Activated T-helper 2 cell treated with anti-CD3 and anti-CD28 coated beads, Interferon-gamma antibody, Interleukin-2, Interleukin-4, amounts not matched to agents 10 μg/mL and 5 μg/mL and 100 μg/mL, durations not matched to agents 14 hours and 24 hours and 36 hours (primary cell): ENCODE measurements at regions of chr16 and their contacts with region 1.

Region 1: DNA sequence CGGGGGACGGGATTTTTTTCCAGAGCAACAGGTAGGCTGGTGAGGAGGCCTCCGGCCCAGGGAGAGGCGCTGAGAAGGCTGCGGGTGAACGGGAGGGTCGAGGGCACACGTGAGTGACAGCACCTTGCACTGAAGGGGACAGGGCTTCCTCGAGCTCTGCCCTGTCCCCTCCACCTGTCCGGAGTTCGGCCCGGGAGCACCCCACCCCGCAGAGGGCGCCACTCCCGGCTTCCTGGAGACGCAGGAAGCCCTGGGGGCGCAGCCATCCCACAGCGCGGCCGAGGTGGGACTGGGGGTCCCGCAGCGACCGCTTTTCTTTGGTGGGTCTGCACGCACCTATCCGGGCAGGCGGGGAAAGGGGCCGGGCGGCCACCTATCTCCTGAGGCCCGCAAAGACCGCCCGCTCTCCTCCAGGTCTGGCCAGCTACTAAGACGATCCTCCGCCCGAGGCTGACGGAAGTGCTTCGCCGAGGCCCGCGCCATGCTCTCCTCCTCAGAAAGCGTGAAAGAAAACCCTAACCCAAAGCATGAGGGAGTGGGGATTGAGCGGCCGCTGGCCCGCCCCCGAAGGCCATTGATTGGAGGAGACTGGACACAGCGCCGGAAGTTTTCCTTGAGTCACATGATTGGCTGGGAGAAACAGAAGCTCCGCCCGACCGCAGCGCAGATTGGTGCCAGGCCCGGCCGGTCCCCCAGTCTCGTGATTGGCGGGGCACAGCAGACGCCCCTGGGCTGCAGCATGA is 34.3 kb downstream of the DDX19A start:
- DNase-seq: peak; percentile 97
- H3K4me3 Mint-ChIP-seq: peak overlapping the region; percentile 98
- H3K27ac Mint-ChIP-seq: peak overlapping the region; percentile 99
- H3K4me1 Mint-ChIP-seq: peaks cover 2% of the 10 kb centered on the region
- H3K27me3 Mint-ChIP-seq: no peaks in the 10 kb centered on the region

Region 2: DNA sequence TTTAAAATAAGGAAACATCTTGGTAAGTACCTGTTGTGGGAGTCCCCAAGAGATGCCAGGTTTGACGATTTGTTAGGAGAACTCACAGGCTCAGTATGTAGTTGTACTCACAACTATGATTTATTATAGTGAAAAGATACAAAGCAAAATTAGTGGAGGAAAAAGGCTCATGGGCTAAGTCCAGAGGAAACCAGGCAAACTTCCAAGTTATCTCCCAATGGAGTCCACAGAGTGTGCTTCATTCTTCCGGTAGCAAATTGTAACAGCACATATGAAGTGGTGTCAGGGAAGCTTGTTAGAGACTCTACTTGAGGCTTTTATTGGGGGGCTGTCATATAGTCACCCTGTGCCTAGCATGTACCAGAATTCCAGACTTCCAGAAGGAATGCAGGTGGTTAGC is 32.0 kb before region 1 on chr16:
- intact Hi-C with region 1: loop called (anchors 1 kb)
- DNase-seq: no peak
- H3K4me3 Mint-ChIP-seq: no peak overlapping the region
- H3K27ac Mint-ChIP-seq: peak overlapping the region; percentile 28
- H3K4me1 Mint-ChIP-seq: peaks cover 24% of the 10 kb centered on the region
- H3K27me3 Mint-ChIP-seq: no peaks in the 10 kb centered on the region

Region 3: DNA sequence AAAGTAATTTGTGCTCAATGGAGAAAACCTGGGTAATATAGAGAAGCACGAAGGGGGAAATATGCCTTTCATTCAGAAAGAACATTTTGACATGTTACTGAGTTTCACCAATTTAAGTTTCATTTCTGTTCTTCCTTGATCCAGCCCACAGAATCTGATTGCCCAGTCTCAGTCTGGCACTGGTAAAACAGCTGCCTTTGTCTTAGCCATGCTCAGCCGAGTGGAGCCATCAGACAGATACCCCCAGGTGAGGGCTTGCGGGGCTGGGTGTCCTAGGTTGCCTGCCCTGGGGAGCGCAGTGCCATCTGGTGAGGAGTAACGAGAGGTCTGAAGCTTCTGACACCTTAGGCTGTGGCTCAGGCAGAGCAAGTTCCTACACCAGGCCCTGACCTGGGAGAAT is 16.6 kb before region 1 on chr16:
- intact Hi-C with region 1: no loop called
- DNase-seq: no peak
- H3K4me3 Mint-ChIP-seq: no peak overlapping the region
- H3K27ac Mint-ChIP-seq: no peak overlapping the region
- H3K4me1 Mint-ChIP-seq: no peaks in the 10 kb centered on the region
- H3K27me3 Mint-ChIP-seq: no peaks in the 10 kb centered on the region

Region 4: DNA sequence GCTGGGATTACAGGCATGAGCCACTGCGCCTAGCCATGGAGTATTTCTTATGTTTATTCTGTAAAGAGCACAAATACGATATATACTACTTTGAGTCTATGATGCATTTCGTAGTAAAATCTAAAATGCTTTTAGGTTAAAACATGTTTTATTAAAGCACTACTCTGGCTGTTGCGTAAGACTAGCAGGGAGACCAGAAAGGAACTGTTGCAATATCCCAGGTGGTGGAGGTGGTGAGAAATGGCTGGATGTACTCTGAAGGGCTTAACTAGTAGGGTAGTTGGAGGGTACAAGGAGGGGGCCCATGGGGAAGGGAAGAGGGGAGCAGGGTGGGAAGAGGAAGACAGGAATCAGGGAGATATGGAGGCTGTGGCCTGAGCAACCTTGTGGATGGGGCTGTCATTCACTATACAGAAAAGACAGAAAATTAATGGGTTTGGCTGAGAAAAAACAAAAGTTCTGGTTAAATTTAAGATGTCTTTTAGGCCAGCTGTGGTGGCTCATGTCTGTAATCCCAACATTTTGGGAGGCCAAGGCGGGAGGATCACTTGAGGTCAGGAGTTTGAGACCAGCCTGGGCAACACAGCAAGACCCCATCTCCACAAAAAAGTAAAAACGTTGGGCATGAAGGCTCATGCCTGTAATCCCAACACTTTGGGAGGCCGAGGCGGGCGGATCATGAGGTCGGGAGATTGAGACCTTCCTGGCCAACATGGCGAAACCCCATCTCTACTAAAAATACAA is 22.1 kb after region 1 on chr16:
- intact Hi-C with region 1: loop called (anchors 2 kb)
- DNase-seq: no peak
- H3K4me3 Mint-ChIP-seq: no peak overlapping the region
- H3K27ac Mint-ChIP-seq: peak overlapping the region; percentile 8
- H3K4me1 Mint-ChIP-seq: peaks cover 36% of the 10 kb centered on the region
- H3K27me3 Mint-ChIP-seq: no peaks in the 10 kb centered on the region

Region 5: GRCh38 chr16:70428178-70428998 is 47.4 kb after region 1 on chr16:
- intact Hi-C with region 1: loop called (anchors 2 kb)
- DNase-seq: peak; percentile 33
- H3K4me3 Mint-ChIP-seq: peak overlapping the region; percentile 45
- H3K27ac Mint-ChIP-seq: peak overlapping the region; percentile 75
- H3K4me1 Mint-ChIP-seq: peaks cover 45% of the 10 kb centered on the region
- H3K27me3 Mint-ChIP-seq: no peaks in the 10 kb centered on the region

Region 6: DNA sequence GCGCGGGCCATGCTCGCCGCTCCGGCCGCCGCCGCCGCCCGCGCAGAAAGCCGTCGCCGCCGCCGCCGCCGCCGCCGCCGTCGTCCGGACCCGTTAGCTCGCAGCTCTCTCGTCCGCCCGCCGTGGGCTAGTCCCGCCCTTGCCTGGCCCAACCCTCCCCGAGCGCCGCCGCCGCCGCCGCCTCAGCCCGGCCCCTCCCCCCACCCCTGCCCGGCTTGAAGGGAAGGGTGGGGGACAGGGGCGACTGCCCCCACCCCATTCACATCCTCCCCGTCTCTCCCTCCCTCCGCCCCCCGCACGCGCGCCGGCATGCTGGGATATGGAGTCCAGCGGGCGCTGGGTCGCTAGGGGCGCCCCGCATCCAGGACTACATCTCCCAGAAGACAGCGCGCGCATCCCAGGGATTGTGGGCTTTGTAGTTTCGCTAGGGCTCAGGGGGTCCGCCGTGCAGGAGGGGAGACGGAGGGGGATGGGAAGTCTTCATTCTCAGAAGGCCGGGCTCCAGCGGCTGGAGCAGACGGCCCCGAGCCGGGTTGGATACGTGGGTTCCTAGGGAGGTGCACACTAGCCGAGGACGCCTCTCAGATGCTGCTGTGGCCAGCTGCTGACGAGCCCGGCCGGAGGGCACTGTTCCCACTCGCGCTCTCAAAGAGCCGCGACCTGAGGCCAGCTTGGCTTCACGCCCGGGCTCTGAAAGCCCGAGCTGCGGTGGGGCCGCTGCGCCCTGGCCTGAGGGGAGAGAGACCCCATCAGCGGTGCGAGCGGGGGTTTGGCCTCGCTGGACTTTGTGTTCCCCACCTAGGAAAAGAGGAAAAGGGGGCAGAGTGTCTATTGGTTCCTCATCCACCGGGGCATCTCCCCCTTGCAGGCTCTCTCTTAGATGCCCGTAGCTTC is 58.2 kb after region 1 on chr16 and contains the start of gene ST3GAL2:
- intact Hi-C with region 1: loop called (anchors 1 kb)
- DNase-seq: peak; percentile 91
- H3K4me3 Mint-ChIP-seq: peak within 1 kb of the TSS; percentile 91
- H3K27ac Mint-ChIP-seq: peak within 1 kb of the TSS; percentile 89
- H3K4me1 Mint-ChIP-seq: peaks cover 21% of the 10 kb centered on the region
- H3K27me3 Mint-ChIP-seq: no peaks in the 10 kb centered on the region
- total RNA-seq, gene ST3GAL2: 33.0 and 35.1 TPM in 2 replicates

Region 7: DNA sequence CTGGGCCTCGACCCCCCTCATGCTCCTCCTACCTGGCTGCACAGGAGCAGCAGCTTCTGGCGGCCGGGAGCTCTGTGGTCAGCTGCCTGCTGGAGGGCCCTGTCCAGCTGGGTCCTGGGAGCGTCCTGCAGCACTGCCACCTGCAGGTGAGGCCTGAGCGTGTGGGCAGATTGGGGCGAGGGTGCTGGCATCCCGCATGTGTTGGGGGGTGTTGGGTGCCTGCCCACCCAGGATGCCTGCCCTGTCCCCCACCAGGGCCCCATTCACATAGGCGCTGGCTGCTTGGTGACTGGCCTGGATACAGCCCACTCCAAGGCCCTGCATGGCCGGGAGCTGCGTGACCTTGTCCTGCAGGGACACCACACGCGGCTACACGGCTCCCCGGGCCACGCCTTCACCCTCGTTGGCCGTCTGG is 89.9 kb after region 1 on chr16:
- intact Hi-C with region 1: loop called (anchors 1 kb)
- DNase-seq: no peak
- H3K4me3 Mint-ChIP-seq: no peak overlapping the region
- H3K27ac Mint-ChIP-seq: no peak overlapping the region
- H3K4me1 Mint-ChIP-seq: peaks cover 4% of the 10 kb centered on the region
- H3K27me3 Mint-ChIP-seq: no peaks in the 10 kb centered on the region

Region 8: GRCh38 chr16:70653809-70654771 is 273.1 kb after region 1 on chr16:
- intact Hi-C with region 1: loop called (anchors 5 kb)
- DNase-seq: peak; percentile 74
- H3K4me3 Mint-ChIP-seq: peak overlapping the region; percentile 44
- H3K27ac Mint-ChIP-seq: no peak overlapping the region
- H3K4me1 Mint-ChIP-seq: peaks cover 5% of the 10 kb centered on the region
- H3K27me3 Mint-ChIP-seq: peaks cover 1% of the 10 kb centered on the region